ENCODE measurements at regions of chr4 and their contacts with region 1.

Region 1: GRCh38 chr4:8440492-8441341 is at the starts of genes ACOX3 and TRMT44:
- DNase-seq: peak; percentile 90 to 97
- H3K4me3 ChIP-seq: peak within 1 kb of the TSS; percentile 96
- H3K4me3 Mint-ChIP-seq: peak within 1 kb of the TSS; percentile 84
- H3K27ac Mint-ChIP-seq: peak within 1 kb of the TSS; percentile 98
- H3K4me1 ChIP-seq: peaks cover 7% of the 10 kb centered on the region; the same call in 1 of the 2 replicates
- H3K4me1 Mint-ChIP-seq: peaks cover 35% of the 10 kb centered on the region
- H3K27me3 ChIP-seq: no peaks in the 10 kb centered on the region
- H3K27me3 Mint-ChIP-seq: no peaks in the 10 kb centered on the region
- CTCF ChIP-seq: no peak
- total RNA-seq, gene ACOX3: 11.5 and 14.1 TPM in 2 replicates
- total RNA-seq, gene TRMT44: 22.3 and 23.4 TPM in 2 replicates

Region 2: GRCh38 chr4:8383451-8384160 is 57.1 kb before region 1 on chr4:
- CTCF ChIA-PET with region 1: no interaction called
- POLR2A ChIA-PET with region 1: no interaction called
- intact Hi-C with region 1: no loop called
- DNase-seq: no peak
- H3K4me3 ChIP-seq: no peak overlapping the region
- H3K4me3 Mint-ChIP-seq: no peak overlapping the region
- H3K27ac Mint-ChIP-seq: no peak overlapping the region
- H3K4me1 ChIP-seq: peaks cover 7% of the 10 kb centered on the region
- H3K4me1 Mint-ChIP-seq: peaks cover 12% of the 10 kb centered on the region
- H3K27me3 ChIP-seq: no peaks in the 10 kb centered on the region
- H3K27me3 Mint-ChIP-seq: no peaks in the 10 kb centered on the region
- CTCF ChIP-seq: no peak

Region 3: GRCh38 chr4:8428293-8429097 is 12.2 kb before region 1 on chr4:
- CTCF ChIA-PET with region 1: interaction called, 4 read pairs
- POLR2A ChIA-PET with region 1: interaction called, 7 read pairs
- intact Hi-C with region 1: loop called (anchors 1 kb)
- DNase-seq: peak; percentile 87 to 95
- H3K4me3 ChIP-seq: peak overlapping the region; percentile 60
- H3K4me3 Mint-ChIP-seq: peak overlapping the region; percentile 77
- H3K27ac Mint-ChIP-seq: peak overlapping the region; percentile 91
- H3K4me1 ChIP-seq: peaks cover 5% of the 10 kb centered on the region; the same call in 1 of the 2 replicates
- H3K4me1 Mint-ChIP-seq: peaks cover 10% of the 10 kb centered on the region
- H3K27me3 ChIP-seq: no peaks in the 10 kb centered on the region
- H3K27me3 Mint-ChIP-seq: no peaks in the 10 kb centered on the region
- CTCF ChIP-seq: peak; percentile 34 to 42

Region 4: DNA sequence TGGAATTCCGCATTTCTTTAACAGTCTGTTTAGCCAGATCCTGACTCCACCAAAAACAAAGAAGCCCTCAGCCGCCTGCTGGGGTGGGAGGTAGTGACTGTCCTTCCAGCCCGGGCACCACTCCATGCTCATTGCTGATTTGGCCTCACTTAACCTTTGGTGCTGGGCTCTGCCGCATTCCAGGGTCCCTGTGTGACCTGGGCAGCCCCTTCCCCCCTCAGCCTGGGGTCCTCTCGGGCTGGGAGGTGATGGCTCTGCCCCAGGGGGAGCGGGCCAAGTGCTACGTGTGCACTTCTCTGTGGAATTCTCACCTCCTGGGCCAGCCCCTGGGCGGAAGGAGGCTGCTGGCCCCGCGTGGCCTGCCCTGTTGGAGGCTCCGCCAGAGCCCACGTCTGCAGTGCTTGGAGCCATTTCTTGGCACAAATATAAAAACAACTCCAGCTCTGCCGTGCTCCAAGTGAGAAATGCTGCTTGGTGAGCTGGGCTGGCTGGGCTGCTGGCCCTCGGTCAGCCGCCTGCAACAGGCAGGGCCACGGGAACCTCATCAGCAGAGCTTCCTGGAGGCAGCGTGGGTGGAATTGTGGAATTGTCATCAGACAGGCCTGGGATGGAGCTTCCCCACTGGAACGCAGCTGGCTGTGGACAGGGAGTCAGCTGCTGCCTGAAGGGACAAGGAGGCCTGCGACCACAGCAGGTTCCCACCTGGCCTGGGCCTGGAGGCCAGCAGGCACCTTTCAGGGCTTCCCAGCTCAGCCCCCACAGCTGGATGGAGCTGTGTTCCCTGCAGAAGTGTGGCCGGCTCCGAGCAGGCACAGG is 65.9 kb after region 1 on chr4:
- CTCF ChIA-PET with region 1: no interaction called
- POLR2A ChIA-PET with region 1: no interaction called
- intact Hi-C with region 1: no loop called
- DNase-seq: no peak
- H3K4me3 ChIP-seq: no peak overlapping the region
- H3K4me3 Mint-ChIP-seq: no peak overlapping the region
- H3K27ac Mint-ChIP-seq: no peak overlapping the region
- H3K4me1 ChIP-seq: no peaks in the 10 kb centered on the region
- H3K4me1 Mint-ChIP-seq: no peaks in the 10 kb centered on the region
- H3K27me3 ChIP-seq: no peaks in the 10 kb centered on the region
- H3K27me3 Mint-ChIP-seq: no peaks in the 10 kb centered on the region
- CTCF ChIP-seq: no peak